Right ventricle myocardium inferior (tissue), 1 donor: ENCODE measurements at regions of chr3 and their contacts with region 1.

Region 1: GRCh38 chr3:41881233-41881821 is 80.6 kb downstream of the ULK4 start:
- DNase-seq: no peak
- ATAC-seq: no peak

Region 2: DNA sequence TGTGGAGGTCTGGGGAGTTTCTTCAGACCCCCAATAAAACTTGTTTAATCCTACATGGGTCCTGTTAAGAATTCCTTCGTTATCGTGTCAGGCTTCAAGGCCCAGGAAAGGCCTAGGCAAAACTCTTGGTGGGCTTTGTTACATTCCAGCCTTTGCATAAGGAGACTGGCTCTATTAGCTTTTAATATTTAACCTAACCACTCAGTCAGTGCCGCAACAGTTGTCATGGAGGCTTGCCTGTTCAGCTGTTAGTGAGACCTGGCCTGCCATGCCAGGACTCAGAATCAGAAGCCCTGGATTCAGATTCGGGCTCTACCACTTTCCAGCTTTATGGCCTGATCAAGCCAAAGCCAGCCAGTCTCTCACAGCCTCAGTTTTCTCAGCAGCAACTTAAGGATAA is 1552.3 kb before region 1 on chr3:
- intact Hi-C with region 1: loop called (anchors 5 kb)
- DNase-seq: no peak
- ATAC-seq: no peak